Cardiac septum (tissue), 1 donor: ENCODE measurements at regions of chr5 and their contacts with region 1.

Region 1: GRCh38 chr5:172868924-172869591 is 35.0 kb downstream of the ERGIC1 start:
- DNase-seq: no peak

Region 2: GRCh38 chr5:172795318-172795977 is 73.6 kb before region 1 on chr5:
- intact Hi-C with region 1: loop called (anchors 5 kb)
- DNase-seq: peak; percentile 92

Region 3: DNA sequence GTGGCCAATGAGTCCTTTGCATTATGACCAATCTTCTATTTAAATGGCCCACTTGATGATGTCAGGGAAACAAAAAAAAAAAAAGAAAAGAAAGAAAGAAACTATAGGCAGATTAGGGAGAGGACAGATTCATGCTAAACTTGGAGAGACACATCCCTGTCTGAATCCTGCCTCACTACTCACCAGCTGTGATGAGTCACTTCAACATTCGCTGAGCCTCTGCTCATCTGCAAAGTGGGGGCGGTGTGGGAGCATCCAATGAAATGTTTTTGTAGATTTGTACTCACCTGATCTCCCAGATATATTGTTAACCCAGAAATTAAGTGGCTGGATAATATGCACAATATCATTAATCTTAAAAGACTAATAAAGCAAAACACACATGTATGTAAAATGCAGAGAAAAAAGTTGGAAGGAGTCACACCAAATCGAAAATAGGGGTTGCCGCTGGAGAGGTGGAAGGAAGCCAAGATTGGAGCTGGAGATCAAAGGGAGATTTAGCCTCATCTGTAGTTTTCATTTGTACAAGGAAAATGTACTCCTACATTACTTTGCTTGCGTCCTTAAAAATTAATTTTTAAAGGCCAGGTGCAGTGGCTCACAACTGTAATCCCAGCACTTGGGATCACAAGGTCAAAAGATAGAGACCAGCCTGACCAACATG is 52.0 kb before region 1 on chr5:
- intact Hi-C with region 1: no loop called
- DNase-seq: peak; percentile 49

Region 4: GRCh38 chr5:172902497-172903200 is 33.6 kb after region 1 on chr5:
- intact Hi-C with region 1: loop called (anchors 5 kb)
- DNase-seq: peak; percentile 87